Activated naive CD4-positive, alpha-beta T cell treated with anti-CD3 and anti-CD28 coated beads, Interleukin-2, amount 10 ng/mL, durations not matched to agents 7 days and 5 days (primary cell): ENCODE measurements at regions of chr7 and their contacts with region 1.

Region 1: DNA sequence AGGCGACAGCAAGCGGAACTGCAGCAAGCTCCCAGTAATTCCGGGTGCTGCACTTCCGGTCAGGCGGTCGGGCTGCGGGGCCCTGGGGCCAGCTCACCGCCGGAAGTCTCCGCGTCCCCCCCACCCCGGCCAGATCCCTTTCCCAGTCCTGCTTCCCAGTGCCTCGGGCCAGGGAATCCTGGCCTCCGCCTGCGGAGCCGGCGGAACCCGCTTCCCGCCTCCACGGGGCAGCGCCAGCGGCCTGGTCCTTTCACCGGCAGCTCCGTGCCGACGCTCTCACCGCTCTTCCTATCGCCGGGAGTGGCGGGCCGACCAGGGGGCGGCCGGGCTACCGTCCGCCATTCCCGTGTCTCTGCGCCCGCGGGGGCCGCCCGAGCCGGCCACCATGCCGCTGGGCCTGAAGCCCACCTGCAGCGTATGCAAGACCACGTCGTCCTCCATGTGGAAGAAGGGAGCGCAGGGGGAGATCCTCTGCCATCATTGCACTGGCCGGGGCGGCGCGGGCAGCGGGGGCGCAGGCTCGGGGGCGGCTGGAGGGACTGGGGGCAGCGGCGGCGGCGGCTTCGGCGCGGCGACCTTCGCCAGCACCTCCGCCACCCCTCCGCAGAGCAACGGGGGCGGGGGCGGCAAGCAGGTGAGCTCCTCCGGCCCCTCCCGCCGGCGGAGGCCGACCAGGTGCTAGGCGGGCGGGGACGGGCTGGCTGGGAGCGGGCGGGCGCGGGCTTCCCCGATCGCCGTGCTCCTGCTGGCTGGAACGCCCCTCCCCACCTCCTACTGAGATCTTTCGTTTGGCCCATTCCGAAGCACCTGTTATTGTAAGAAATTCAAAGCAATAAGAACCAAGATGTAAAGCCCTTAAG is at the start of gene GATAD1:
- DNase-seq: peak; percentile 85
- H3K4me3 Mint-ChIP-seq: peak within 1 kb of the TSS; percentile 83
- H3K27ac Mint-ChIP-seq: peak within 1 kb of the TSS; percentile 94
- H3K4me1 Mint-ChIP-seq: peaks cover 16% of the 10 kb centered on the region
- H3K27me3 Mint-ChIP-seq: no peaks in the 10 kb centered on the region

Region 2: DNA sequence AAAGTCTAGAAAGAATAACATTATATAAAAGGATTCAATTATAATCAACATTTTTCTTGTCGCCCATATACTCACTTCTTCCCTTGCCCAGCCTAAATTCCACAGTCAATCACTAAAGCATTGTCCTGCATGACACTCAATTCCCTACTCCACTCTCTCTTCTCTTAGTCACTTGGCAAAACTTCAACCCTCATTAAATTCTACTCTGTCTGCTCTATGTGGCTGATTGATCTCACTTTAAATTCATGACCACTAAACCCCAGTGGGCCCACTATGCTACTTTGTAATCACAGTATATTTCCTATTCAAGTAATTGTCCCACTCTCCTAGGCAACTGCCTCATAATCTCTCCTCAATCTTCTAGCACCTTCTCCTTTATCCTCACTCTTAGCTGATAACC is 621.2 kb before region 1 on chr7:
- CTCF ChIA-PET with region 1: interaction called, 12 read pairs
- DNase-seq: no peak
- H3K4me3 Mint-ChIP-seq: no peak overlapping the region
- H3K27ac Mint-ChIP-seq: no peak overlapping the region
- H3K4me1 Mint-ChIP-seq: no peaks in the 10 kb centered on the region
- H3K27me3 Mint-ChIP-seq: no peaks in the 10 kb centered on the region

Region 3: DNA sequence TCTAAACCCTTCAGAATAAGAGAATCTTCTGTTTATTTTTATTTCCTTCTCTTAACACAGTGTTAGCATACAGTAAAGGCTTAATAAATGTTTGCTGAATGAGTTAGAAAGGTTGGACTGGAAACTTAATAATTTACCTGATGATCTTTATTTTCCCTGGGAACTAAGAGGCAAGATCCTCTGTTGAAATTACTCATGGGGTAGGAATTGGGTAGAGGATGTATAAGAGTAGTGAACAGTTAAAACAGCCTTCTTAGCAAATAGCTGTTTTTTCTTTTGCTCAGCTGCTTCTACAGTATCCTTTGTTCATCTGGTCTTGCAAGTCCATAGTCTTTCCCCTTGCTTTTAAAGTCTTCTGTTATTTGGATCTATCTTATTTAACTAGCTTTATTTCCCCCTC is 426.9 kb before region 1 on chr7:
- CTCF ChIA-PET with region 1: no interaction called
- DNase-seq: no peak
- H3K4me3 Mint-ChIP-seq: no peak overlapping the region
- H3K27ac Mint-ChIP-seq: no peak overlapping the region
- H3K4me1 Mint-ChIP-seq: no peaks in the 10 kb centered on the region
- H3K27me3 Mint-ChIP-seq: no peaks in the 10 kb centered on the region

Region 4: GRCh38 chr7:92425321-92425947 is 22.1 kb before region 1 on chr7:
- CTCF ChIA-PET with region 1: interaction called, 63 read pairs
- DNase-seq: peak; percentile 32
- H3K4me3 Mint-ChIP-seq: no peak overlapping the region
- H3K27ac Mint-ChIP-seq: no peak overlapping the region
- H3K4me1 Mint-ChIP-seq: peaks cover 20% of the 10 kb centered on the region
- H3K27me3 Mint-ChIP-seq: peaks cover 31% of the 10 kb centered on the region

Region 5: GRCh38 chr7:92461027-92462003 is 13.7 kb after region 1 on chr7:
- CTCF ChIA-PET with region 1: interaction called, 11 read pairs
- DNase-seq: peak; percentile 38
- H3K4me3 Mint-ChIP-seq: no peak overlapping the region
- H3K27ac Mint-ChIP-seq: no peak overlapping the region
- H3K4me1 Mint-ChIP-seq: no peaks in the 10 kb centered on the region
- H3K27me3 Mint-ChIP-seq: no peaks in the 10 kb centered on the region

Region 6: GRCh38 chr7:92489634-92490033 is 42.1 kb after region 1 on chr7:
- CTCF ChIA-PET with region 1: no interaction called
- DNase-seq: no peak
- H3K4me3 Mint-ChIP-seq: no peak overlapping the region
- H3K27ac Mint-ChIP-seq: no peak overlapping the region
- H3K4me1 Mint-ChIP-seq: no peaks in the 10 kb centered on the region
- H3K27me3 Mint-ChIP-seq: no peaks in the 10 kb centered on the region